ENCODE measurements at regions of chr11 and their contacts with region 1.

Region 1: DNA sequence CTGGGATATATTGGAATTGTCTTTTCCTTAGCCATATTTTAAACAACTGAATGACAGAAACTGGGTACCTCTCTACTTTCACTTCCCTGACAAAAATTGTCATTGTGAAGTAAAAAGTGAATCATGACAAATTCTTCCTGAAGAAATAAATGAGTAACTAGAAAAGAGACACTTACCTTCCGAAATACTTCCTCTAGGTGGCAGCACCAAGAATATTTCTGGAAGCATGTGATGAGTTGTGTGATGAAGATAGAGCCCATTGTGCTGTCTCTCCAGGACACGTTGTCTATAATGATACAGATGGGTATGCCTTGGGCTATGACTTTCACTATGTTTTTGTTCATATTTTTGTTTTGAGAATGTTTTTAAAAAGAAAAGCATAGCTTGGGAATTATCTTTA is 21.5 kb downstream of the CASP4 start:
- DNase-seq: peak in 7 of 9 donors; percentile 11 to 59 (median 50)
- ATAC-seq: peak; percentile 86
- H3K4me3 ChIP-seq: no peak overlapping the region
- H3K4me3 Mint-ChIP-seq: no peak overlapping the region
- H3K27ac ChIP-seq: no peak overlapping the region
- H3K27ac Mint-ChIP-seq: peak overlapping the region in 6 of 9 donors; percentile 3 to 55 (median 39)
- H3K4me1 ChIP-seq: no peaks in the 10 kb centered on the region
- H3K4me1 Mint-ChIP-seq: peaks cover 5 to 25% (median 14%) of the 10 kb centered on the region in 7 donors
- H3K27me3 ChIP-seq: no peaks in the 10 kb centered on the region
- H3K27me3 Mint-ChIP-seq: no peaks in the 10 kb centered on the region

Region 2: DNA sequence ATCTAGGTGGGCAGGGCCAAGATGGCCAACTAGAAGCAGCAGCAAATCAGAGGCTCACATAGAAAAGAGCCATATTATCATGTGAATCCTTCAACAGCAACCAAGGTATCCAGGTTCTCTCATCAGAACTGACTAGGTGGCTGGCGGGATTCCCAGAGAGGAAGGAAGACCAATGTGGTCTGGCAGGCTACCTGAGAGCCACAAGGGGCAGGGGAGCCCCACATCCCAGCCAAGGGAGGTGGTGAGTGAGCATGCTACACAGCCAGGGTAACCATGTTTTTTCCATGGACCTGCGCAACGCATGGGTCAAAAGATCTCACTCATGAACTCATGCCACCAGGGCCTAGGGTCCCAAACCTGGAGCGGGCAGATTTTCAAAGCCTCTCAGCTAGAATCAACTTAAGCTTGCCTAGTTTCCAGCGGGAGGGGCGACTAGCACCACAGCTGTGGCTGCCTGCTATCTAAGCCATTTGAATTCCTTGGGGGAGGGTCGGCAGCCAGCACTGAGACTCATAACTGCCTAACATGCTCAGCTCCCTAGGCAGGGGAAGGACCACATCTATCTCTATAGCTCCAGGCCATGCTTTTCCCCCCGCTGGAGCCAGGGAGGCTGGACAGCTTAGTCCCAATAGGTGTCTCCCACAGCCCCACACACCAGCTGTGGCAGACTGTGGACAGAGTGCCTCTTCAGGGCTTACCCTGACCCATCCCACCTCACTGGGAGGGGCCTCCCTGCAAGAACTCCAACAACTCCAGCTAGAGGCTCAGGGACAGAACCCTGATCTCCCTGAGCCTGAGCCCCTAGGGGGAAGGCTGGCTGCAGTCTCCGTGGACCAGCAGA is 19.9 kb before region 1 on chr11:
- CTCF ChIA-PET with region 1: no interaction called
- POLR2A ChIA-PET with region 1: no interaction called
- intact Hi-C with region 1: no loop called
- DNase-seq: no peak
- ATAC-seq: no peak
- H3K4me3 ChIP-seq: no peak overlapping the region
- H3K4me3 Mint-ChIP-seq: no peak overlapping the region
- H3K27ac ChIP-seq: no peak overlapping the region
- H3K27ac Mint-ChIP-seq: no peak overlapping the region
- H3K4me1 ChIP-seq: no peaks in the 10 kb centered on the region
- H3K4me1 Mint-ChIP-seq: peaks cover 2 to 29% (median 11%) of the 10 kb centered on the region in 7 donors
- H3K27me3 ChIP-seq: no peaks in the 10 kb centered on the region
- H3K27me3 Mint-ChIP-seq: peaks cover 0 to 33% (median 0%) of the 10 kb centered on the region in 5 donors

Region 3: DNA sequence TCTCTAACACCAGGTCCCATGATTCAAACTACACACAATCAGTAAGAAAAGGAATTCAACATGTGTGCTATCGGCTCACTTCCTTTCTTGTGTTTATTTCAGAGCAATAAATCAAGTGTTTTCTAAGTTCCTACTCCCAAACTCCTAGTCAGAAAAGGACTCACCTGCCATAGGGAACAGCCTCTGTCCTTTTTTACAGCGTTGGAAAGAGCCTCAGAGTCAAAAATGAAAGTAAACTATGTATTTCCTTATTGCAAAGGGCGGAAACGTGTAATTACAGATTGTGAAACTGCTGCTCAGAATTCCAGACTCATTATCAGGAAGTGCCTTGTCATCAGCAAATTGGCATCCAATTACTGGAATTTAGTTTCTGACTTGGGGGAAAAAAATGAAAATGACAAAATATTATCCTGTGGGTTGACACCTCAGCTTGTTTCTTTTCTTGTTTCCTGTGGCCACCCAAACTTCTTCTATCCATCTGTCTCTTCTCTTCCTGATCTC is 21.5 kb after region 1 on chr11 and contains the start of gene CASP4:
- CTCF ChIA-PET with region 1: interaction called, 8 read pairs
- POLR2A ChIA-PET with region 1: interaction called, 4 read pairs
- intact Hi-C with region 1: loop called in 1 of 2 experiments (anchors 2 kb)
- DNase-seq: peak in 7 of 9 donors; percentile 18 to 57 (median 48)
- ATAC-seq: peak; percentile 82
- H3K4me3 ChIP-seq: peak within 1 kb of the TSS; percentile 67
- H3K4me3 Mint-ChIP-seq: peak within 1 kb of the TSS; percentile 90 to 99 (median 96)
- H3K27ac ChIP-seq: peak within 1 kb of the TSS; percentile 89
- H3K27ac Mint-ChIP-seq: peak within 1 kb of the TSS; percentile 94 to 100 (median 97)
- H3K4me1 ChIP-seq: peaks cover 16 to 36% of the 10 kb centered on the region in 2 donors
- H3K4me1 Mint-ChIP-seq: peaks cover 35 to 47% (median 43%) of the 10 kb centered on the region in 7 donors
- H3K27me3 ChIP-seq: no peaks in the 10 kb centered on the region
- H3K27me3 Mint-ChIP-seq: no peaks in the 10 kb centered on the region
- total RNA-seq, gene CASP4: 60.7 to 94.7 (median 76.9) TPM

Region 4: DNA sequence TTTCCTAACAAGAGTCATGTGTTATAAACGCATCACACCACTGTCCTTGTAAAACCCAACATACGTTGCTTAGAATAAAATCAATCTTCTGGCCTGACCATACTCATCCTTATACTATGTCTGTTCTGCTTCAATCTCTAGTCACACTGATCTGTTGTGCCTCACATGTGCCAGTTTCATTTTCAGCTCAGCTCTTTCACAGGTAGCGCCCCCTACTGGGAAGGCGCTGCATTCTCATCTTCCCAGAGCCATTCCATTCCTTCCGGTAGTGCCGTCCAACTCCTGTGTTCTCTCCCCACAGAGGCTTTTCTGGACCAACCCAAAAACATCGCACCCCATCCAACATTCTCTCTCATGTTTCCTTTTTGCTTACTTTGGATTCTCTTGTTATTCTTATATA is 53.9 kb after region 1 on chr11:
- CTCF ChIA-PET with region 1: no interaction called
- POLR2A ChIA-PET with region 1: no interaction called
- intact Hi-C with region 1: loop called (anchors 2 to 5 kb)
- DNase-seq: peak in 8 of 9 donors; percentile 14 to 56 (median 47)
- ATAC-seq: peak; percentile 85
- H3K4me3 ChIP-seq: no peak overlapping the region
- H3K4me3 Mint-ChIP-seq: no peak overlapping the region
- H3K27ac ChIP-seq: no peak overlapping the region
- H3K27ac Mint-ChIP-seq: peak overlapping the region in 1 of 9 donors; percentile 5
- H3K4me1 ChIP-seq: no peaks in the 10 kb centered on the region
- H3K4me1 Mint-ChIP-seq: peaks cover 4 to 11% (median 7%) of the 10 kb centered on the region in 7 donors
- H3K27me3 ChIP-seq: no peaks in the 10 kb centered on the region
- H3K27me3 Mint-ChIP-seq: no peaks in the 10 kb centered on the region

Region 5: GRCh38 chr11:105124756-105125530 is 178.0 kb after region 1 on chr11:
- CTCF ChIA-PET with region 1: no interaction called
- POLR2A ChIA-PET with region 1: no interaction called
- intact Hi-C with region 1: loop called in 1 of 2 experiments (anchors 5 kb)
- DNase-seq: no peak
- ATAC-seq: no peak
- H3K4me3 ChIP-seq: no peak overlapping the region
- H3K4me3 Mint-ChIP-seq: no peak overlapping the region
- H3K27ac ChIP-seq: no peak overlapping the region
- H3K27ac Mint-ChIP-seq: no peak overlapping the region
- H3K4me1 ChIP-seq: no peaks in the 10 kb centered on the region
- H3K4me1 Mint-ChIP-seq: no peaks in the 10 kb centered on the region
- H3K27me3 ChIP-seq: no peaks in the 10 kb centered on the region
- H3K27me3 Mint-ChIP-seq: peaks cover 0 to 10% (median 0%) of the 10 kb centered on the region in 5 donors

Region 6: GRCh38 chr11:105189581-105189980 is 242.7 kb after region 1 on chr11:
- CTCF ChIA-PET with region 1: no interaction called
- POLR2A ChIA-PET with region 1: no interaction called
- intact Hi-C with region 1: no loop called
- DNase-seq: no peak
- ATAC-seq: peak; percentile 59
- H3K4me3 ChIP-seq: no peak overlapping the region
- H3K4me3 Mint-ChIP-seq: no peak overlapping the region
- H3K27ac ChIP-seq: no peak overlapping the region
- H3K27ac Mint-ChIP-seq: no peak overlapping the region
- H3K4me1 ChIP-seq: no peaks in the 10 kb centered on the region
- H3K4me1 Mint-ChIP-seq: peaks cover 0 to 7% (median 0%) of the 10 kb centered on the region in 7 donors
- H3K27me3 ChIP-seq: no peaks in the 10 kb centered on the region
- H3K27me3 Mint-ChIP-seq: peaks cover 0 to 13% (median 6%) of the 10 kb centered on the region in 5 donors

Measured in naive thymus-derived CD4-positive, alpha-beta T cell (primary cell).